ENCODE measurements at regions of chr19 and their contacts with region 1.

Region 1: DNA sequence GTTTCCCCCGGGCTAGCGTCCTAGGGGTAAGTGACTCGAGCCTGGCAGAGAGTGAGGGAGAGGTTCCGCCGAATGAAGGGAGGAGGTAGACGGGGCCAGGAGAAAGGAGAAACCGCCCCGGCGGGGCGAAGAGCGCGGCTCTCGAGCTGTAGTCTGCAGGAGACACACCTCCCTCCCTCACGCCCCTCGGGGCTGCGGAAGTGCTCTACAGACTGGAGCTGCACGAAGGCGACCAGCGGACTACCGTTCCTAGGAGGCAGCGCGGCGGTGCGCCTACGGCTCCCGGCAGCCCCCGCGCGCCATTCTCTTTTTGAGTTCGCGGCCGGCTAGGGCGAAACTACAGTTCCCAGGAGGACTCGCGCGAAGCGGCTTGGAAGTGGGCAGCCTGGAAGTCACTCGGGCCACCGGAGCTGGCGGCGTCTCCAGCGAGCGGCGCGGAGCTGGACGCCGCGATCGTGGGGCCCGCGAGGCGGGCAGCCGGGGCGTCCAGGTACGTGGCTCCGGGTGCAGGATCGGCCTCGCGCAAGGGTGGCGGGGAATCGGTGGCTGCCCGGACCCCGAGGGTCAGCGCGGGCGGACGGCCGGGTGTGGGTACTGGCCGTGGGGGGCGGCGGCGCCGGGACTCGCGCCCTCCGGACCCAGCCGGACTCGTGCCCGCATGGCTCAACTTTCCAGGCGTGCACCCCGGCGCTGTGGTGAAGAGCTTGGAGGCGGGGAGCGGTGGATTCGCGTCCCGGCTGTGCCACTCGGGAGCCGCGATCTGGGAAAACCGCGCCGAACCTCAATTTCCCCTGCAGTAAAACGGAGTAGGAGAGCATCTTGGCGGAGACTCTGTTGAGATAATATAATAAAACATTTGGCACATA is at the start of gene SIPA1L3:
- DNase-seq: peak; percentile 95 to 98 (median 96)
- ATAC-seq: peak; percentile 93
- H3K4me3 ChIP-seq: peak within 1 kb of the TSS; percentile 85 to 97
- H3K27ac ChIP-seq: peak within 1 kb of the TSS; percentile 44 to 74 (median 62)
- H3K4me1 ChIP-seq: peaks cover 23% of the 10 kb centered on the region
- H3K27me3 ChIP-seq: no peaks in the 10 kb centered on the region
- CTCF ChIP-seq: peak in 3 of 7 experiments; percentile 7 to 15 (median 9)
- POLR2A ChIP-seq: peak; percentile 50 to 62 (median 58)
- total RNA-seq, gene SIPA1L3: 41.5 to 62.0 TPM

Region 2: DNA sequence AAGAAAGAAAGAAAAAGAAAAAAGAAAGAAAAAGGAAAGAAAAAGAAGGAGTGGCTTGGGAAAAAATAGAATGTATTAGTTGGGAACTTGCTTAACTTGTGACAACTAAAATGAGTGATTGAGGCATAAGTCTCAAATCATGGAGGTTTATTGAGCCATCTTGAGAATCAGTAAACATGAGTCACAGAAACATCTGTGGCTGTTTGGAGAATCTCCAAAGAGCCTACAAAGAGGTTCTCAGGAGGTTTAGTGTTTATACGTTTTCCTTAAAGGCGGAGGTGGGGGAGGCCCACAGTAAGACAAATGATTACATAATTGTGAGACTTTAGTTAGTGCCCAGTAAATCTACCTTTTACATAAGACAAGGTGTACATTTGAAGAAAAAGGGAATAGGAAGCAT is 39.3 kb before region 1 on chr19:
- intact Hi-C with region 1: no loop called
- DNase-seq: no peak
- ATAC-seq: no peak
- H3K4me3 ChIP-seq: no peak overlapping the region
- H3K27ac ChIP-seq: no peak overlapping the region
- H3K4me1 ChIP-seq: no peaks in the 10 kb centered on the region
- H3K27me3 ChIP-seq: no peaks in the 10 kb centered on the region
- CTCF ChIP-seq: no peak
- POLR2A ChIP-seq: no peak

Region 3: DNA sequence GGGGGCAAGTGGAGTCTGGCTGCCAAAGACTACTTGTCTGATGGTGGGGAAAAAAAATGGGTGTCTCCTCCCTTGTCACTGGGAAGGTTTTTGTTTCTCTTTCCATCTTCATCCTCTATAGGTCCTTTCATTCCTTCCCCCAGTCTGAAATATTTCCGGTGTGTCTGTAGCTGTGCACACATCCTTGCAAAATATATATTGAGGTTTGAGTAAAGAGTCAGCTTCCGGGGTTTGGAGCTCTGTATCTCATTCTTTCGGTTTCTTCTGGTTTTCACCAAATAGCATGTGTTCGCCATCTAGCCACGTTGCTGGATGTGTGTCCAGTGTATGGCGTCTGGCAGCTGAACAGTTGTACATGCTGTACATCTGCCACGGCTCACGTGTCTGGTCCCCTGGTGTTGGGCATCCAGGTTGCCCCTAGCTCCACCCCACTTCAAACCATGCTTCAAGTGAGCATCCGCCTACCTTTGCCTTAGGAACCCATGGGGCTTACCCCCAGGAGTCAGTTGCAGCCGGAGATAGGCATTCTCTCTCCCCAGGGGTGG is 142.1 kb after region 1 on chr19:
- intact Hi-C with region 1: no loop called
- DNase-seq: no peak
- ATAC-seq: no peak
- H3K4me3 ChIP-seq: no peak overlapping the region
- H3K27ac ChIP-seq: peak overlapping the region in 1 of 4 donors; percentile 61
- H3K4me1 ChIP-seq: no peaks in the 10 kb centered on the region
- H3K27me3 ChIP-seq: no peaks in the 10 kb centered on the region
- CTCF ChIP-seq: no peak
- POLR2A ChIP-seq: no peak

Region 4: DNA sequence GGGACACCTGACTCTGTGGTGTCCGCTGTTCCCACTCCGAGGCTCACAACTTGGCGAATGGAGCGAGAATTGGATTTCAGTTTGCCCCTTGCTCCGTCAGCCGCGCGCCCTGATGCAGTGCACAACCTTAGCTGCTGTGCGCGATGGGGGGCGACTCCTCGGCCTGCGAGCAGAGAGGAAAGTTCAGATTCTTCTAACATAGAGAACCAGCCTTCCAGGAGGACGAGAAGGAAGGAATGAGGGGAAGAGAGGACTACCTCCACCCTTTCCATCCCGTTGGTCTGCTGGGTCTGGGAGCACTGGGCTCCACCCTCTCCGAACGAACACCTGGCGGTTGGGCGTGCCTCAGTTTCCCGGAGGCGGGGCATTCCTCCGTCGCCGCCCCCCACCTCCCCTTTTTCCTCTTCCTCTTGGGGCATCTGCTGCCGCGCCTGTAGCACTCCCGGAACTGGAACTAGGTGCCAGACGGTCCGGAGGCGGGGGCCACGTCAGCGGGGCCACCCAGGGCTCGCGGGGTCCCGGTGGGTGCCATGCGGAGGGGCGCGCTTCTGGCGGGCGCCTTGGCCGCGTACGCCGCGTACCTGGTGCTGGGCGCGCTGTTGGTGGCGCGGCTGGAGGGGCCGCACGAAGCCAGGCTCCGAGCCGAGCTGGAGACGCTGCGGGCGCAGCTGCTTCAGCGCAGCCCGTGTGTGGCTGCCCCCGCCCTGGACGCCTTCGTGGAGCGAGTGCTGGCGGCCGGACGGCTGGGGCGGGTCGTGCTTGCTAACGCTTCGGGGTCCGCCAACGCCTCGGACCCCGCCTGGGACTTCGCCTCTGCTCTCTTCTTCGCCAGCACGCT is 412.5 kb after region 1 on chr19 and contains the start of gene KCNK6:
- intact Hi-C with region 1: loop called (anchors 10 kb)
- DNase-seq: peak; percentile 61 to 65 (median 62)
- ATAC-seq: peak; percentile 18
- H3K4me3 ChIP-seq: peak within 1 kb of the TSS; percentile 32 to 33
- H3K27ac ChIP-seq: peak within 1 kb of the TSS; percentile 54 to 79 (median 66)
- H3K4me1 ChIP-seq: peaks cover 40% of the 10 kb centered on the region
- H3K27me3 ChIP-seq: no peaks in the 10 kb centered on the region
- CTCF ChIP-seq: peak in 1 of 7 experiments; percentile 30
- POLR2A ChIP-seq: peak; percentile 61 to 73 (median 72)
- total RNA-seq, gene KCNK6: 8.6 to 13.8 TPM